GM13976 (cell line): ENCODE measurements at regions of chr20 and their contacts with region 1.

Region 1: GRCh38 chr20:45771182-45771759 is 20.4 kb downstream of the WFDC3 start:
- DNase-seq: peak; percentile 75
- CTCF ChIP-seq: peak; percentile 88

Region 2: DNA sequence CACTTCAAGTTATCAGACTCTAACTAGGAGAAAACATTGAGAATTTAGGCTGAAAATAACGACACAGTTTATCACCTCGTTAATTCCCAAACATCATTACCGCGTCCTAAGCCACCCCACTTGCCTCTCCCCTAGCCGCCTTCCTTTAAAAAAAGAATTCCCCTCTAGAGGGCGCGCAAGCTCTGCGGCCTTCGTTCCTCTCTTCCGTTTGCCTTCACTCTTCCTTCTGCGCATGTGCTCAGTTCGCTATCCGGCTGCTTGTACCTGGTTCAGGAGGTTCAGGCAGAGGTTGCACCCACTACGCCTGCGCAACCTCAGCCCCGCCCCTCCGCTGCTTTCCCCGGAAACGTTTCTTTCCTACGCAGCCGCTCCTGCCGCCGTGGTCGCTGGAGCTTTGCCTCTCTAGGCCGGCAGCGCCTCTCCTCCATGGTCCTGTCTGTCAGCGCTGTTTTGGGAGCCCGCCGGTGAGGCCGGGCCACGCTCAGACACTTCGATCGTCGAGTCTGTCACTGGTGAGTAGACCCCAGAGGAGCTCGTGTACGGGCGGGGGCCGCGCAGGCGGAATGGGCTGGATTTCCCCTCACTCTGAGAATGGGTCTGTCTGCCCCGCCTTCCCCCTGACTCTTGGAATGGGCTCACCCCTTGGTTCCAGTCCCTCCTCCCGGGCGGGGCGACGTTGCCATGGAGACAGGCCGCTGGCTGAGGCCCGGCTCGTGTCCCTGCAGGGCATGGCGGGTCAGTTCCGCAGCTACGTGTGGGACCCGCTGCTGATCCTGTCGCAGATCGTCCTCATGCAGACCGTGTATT is 408.3 kb before region 1 on chr20 and contains the start of gene SYS1:
- in situ Hi-C with region 1: loop called (anchors 25 kb)
- DNase-seq: peak; percentile 96
- CTCF ChIP-seq: peak; percentile 81

Region 3: DNA sequence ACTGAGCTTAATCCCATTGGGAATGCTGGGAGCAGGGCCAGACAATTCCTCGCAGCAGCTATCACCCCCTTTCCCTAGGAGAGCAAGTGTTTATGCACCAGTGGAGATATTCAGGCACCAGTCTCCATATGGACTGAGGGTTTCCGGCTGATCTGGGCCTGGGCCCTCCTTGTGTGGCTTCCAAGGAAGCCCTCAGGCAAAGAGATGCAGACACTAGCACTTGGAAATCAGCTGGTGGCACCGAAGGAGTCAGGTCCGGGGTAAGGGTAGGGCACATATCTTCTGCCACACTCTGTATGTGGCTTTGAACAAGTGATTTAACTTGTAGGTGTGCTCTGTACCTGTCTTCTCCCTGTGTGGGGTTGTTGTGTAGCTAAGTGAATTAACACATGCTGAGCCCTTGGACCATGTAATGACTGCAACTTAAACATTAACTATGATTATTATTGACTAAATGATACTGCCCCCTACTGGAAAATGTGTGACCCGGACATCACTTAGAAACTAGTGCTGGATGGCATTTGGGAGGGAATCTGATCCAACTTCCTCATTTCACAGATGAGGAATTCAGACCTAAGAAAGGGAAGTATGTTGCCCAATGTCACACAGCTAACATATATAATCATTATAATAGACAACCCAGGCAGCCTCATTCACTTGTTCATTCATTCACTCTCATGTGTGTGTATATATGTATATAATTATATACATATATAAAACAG is 321.0 kb before region 1 on chr20:
- in situ Hi-C with region 1: loop called (anchors 25 kb)
- DNase-seq: peak; percentile 45
- CTCF ChIP-seq: peak; percentile 43

Region 4: DNA sequence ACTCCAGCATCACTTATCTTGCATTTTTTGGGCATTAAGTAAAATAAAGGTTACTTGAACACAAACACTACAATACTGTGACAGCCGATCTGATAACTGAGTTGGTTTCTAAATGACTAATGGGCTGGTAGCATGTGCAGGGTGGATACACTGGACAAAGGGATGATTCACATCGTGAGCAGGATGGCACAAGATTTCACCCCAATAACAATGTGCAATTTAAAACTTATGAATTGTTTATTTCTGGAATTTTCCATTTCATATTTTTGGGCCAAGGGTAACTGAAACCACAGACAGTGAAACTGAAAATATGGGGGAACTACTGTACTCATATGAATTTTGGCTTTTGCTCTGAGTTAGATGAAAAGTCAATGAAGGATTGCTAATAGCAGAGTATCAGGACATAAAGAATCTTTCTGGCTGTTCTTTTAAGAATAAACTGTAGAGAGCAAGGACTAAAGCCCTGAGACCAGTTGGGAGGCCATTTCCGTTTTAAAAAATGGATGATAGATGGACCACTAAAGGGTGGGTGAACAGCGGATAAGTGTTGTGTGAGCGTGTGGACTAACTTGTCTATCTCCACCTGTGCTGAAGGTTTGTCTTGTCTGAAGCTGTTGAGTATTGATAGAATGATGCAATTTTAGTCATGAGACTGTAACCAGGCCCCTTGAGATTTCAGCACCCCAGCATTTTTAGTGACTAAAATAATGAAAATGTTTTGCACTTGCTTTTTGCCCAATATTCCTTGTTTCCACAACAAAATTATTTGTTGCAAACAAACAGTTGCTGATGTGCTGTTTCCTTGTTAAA is 264.1 kb before region 1 on chr20:
- in situ Hi-C with region 1: no loop called
- DNase-seq: no peak
- CTCF ChIP-seq: no peak

Region 5: GRCh38 chr20:45592574-45593189 is 178.6 kb before region 1 on chr20:
- in situ Hi-C with region 1: loop called (anchors 25 kb)
- DNase-seq: peak; percentile 36
- CTCF ChIP-seq: peak; percentile 48